Left cardiac atrium (tissue), 4 donors: ENCODE measurements at regions of chr2 and their contacts with region 1.

Region 1: DNA sequence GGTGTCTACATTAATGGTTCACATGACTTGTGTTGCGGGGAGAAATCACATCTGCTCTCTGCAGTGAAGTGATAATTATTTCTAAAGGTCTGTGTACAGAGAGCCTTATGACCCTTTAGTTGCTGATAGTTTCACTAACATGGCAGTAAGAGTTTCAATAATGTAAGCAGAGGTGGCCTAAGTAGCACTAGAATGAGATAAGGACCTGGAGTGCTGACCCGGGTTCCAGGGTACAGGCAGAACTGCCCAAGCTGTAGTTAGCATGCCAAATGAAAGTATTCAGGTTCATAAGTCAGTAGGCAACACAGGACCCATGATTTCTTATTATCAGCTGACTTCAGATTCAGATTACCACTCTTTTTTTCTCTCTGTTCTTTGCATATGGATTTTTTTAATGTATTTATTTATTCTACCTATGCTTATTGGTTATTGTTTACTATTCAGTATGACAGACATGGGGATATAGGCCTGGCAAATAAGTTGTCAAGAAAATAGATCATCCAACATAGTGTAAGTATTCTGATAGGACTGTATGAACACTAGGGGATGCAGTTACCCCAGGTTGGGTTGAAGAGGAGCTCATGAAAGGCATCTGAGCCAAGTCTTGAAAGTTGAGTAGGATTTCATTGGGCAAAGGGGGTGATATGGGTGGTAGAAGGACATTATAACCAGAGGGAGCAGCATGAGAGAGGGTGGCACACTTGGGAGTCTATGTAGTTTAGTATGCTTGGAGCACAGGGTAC is 105.2 kb downstream of the CCDC85A start:
- DNase-seq: no peak
- ATAC-seq: no peak

Region 2: GRCh38 chr2:56749152-56749752 is 460.2 kb after region 1 on chr2:
- intact Hi-C with region 1: loop called in 1 of 2 experiments (anchors 2 kb)
- DNase-seq: no peak
- ATAC-seq: no peak

Region 3: GRCh38 chr2:57497489-57498096 is 1208.6 kb after region 1 on chr2:
- intact Hi-C with region 1: loop called in 1 of 2 experiments (anchors 10 kb)
- DNase-seq: peak; percentile 22
- ATAC-seq: no peak